WTC11 (cell line): ENCODE measurements at regions of chr17 and their contacts with region 1.

Region 1: GRCh38 chr17:74864866-74865395 is 5.2 kb upstream of the GRIN2C start:
- DNase-seq: peak; percentile 87
- ATAC-seq: peak; percentile 63
- H3K4me3 Mint-ChIP-seq: no peak overlapping the region
- H3K27ac Mint-ChIP-seq: peak overlapping the region; percentile 16
- H3K4me1 Mint-ChIP-seq: peaks cover 14% of the 10 kb centered on the region
- H3K27me3 Mint-ChIP-seq: peaks cover 27% of the 10 kb centered on the region
- CTCF ChIP-seq: peak; percentile 97

Region 2: DNA sequence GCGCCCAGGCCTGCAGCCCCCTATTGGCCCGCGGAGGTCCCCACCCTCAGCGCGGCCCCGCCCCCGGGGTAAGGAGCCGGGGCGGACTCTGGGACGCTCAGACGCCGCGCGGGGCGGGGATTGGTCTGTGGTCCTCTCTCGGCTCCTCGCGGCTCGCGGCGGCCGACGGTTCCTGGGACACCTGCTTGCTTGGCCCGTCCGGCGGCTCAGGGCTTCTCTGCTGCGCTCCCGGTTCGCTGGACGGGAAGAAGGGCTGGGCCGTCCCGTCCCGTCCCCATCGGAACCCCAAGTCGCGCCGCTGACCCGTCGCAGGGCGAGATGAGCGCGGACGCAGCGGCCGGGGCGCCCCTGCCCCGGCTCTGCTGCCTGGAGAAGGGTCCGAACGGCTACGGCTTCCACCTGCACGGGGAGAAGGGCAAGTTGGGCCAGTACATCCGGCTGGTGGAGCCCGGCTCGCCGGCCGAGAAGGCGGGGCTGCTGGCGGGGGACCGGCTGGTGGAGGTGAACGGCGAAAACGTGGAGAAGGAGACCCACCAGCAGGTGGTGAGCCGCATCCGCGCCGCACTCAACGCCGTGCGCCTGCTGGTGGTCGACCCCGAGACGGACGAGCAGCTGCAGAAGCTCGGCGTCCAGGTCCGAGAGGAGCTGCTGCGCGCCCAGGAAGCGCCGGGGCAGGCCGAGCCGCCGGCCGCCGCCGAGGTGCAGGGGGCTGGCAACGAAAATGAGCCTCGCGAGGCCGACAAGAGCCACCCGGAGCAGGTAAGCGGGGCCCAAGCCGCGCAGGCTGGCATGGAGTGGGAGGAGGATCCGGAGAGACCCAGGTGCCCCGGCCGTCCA is 116.2 kb before region 1 on chr17 and contains the start of gene NHERF1:
- CTCF ChIA-PET with region 1: interaction called, 103 read pairs
- POLR2A ChIA-PET with region 1: no interaction called
- DNase-seq: peak; percentile 61
- ATAC-seq: peak; percentile 86
- H3K4me3 Mint-ChIP-seq: peak within 1 kb of the TSS; percentile 92
- H3K27ac Mint-ChIP-seq: peak within 1 kb of the TSS; percentile 57
- H3K4me1 Mint-ChIP-seq: peaks cover 64% of the 10 kb centered on the region
- H3K27me3 Mint-ChIP-seq: peaks cover 3% of the 10 kb centered on the region; the same call in 1 of the 2 replicates
- CTCF ChIP-seq: no peak
- total RNA-seq, gene NHERF1: 86.9 to 111 TPM (median 97.1 TPM) in 3 replicates

Region 3: DNA sequence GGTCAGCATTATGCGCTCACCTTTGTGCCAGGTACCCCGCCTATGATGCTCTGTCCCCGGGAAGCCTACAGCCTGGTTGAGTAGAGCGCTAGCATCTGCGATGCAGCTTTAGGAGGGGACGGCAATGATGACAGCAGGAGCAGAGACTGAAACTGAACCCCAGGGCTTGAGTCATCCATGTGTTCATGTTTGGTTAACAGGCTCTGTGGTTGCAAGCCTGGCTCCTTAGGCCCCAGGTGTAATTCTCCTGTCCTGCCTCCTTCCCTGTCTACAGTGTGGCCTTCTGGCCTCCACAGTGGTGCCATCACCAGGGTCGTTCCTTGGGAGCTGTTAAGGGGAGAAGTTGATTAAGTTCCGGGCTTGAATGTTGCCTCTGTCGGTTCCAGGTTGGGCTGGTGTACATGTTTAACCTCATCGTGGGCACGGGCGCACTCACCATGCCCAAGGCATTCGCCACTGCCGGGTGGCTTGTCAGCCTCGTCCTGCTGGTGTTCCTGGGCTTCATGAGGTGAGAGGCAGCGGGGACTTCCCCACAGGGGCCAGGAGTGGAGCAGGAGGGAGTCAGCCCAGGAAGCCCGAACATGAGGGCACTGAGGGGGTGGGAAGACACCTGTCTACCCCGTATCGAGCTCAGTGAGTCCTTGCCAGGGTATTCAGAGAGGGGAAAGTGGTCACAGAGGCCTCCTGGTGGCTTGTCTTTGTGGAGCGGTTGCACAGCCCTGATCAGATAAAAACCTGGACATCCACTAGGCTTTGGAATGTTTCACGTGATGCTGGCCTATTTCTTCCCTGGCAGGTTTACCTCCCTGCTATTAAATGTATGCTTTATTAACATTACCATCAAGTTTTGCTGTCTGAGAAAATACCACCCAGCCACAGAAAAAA is 79.6 kb before region 1 on chr17:
- CTCF ChIA-PET with region 1: interaction called, 36 read pairs
- POLR2A ChIA-PET with region 1: no interaction called
- DNase-seq: no peak
- ATAC-seq: no peak
- H3K4me3 Mint-ChIP-seq: no peak overlapping the region
- H3K27ac Mint-ChIP-seq: no peak overlapping the region; the same call in 1 of the 2 replicates
- H3K4me1 Mint-ChIP-seq: peaks cover 26% of the 10 kb centered on the region
- H3K27me3 Mint-ChIP-seq: no peaks in the 10 kb centered on the region
- CTCF ChIP-seq: no peak

Region 4: GRCh38 chr17:74807925-74808324 is 57.0 kb before region 1 on chr17:
- CTCF ChIA-PET with region 1: interaction called, 15 read pairs
- POLR2A ChIA-PET with region 1: no interaction called
- DNase-seq: no peak
- ATAC-seq: no peak
- H3K4me3 Mint-ChIP-seq: no peak overlapping the region
- H3K27ac Mint-ChIP-seq: no peak overlapping the region
- H3K4me1 Mint-ChIP-seq: peaks cover 8% of the 10 kb centered on the region
- H3K27me3 Mint-ChIP-seq: no peaks in the 10 kb centered on the region
- CTCF ChIP-seq: no peak

Region 5: GRCh38 chr17:74842599-74843351 is 22.2 kb before region 1 on chr17:
- CTCF ChIA-PET with region 1: interaction called, 347 read pairs
- POLR2A ChIA-PET with region 1: interaction called, 6 read pairs
- DNase-seq: peak; percentile 75
- ATAC-seq: peak; percentile 81
- H3K4me3 Mint-ChIP-seq: peak overlapping the region; percentile 22; the same call in 1 of the 2 replicates
- H3K27ac Mint-ChIP-seq: no peak overlapping the region
- H3K4me1 Mint-ChIP-seq: peaks cover 21% of the 10 kb centered on the region
- H3K27me3 Mint-ChIP-seq: peaks cover 52% of the 10 kb centered on the region
- CTCF ChIP-seq: no peak